CD4-positive, alpha-beta T cell (primary cell): ENCODE measurements at regions of chr10 and their contacts with region 1.

Region 1: DNA sequence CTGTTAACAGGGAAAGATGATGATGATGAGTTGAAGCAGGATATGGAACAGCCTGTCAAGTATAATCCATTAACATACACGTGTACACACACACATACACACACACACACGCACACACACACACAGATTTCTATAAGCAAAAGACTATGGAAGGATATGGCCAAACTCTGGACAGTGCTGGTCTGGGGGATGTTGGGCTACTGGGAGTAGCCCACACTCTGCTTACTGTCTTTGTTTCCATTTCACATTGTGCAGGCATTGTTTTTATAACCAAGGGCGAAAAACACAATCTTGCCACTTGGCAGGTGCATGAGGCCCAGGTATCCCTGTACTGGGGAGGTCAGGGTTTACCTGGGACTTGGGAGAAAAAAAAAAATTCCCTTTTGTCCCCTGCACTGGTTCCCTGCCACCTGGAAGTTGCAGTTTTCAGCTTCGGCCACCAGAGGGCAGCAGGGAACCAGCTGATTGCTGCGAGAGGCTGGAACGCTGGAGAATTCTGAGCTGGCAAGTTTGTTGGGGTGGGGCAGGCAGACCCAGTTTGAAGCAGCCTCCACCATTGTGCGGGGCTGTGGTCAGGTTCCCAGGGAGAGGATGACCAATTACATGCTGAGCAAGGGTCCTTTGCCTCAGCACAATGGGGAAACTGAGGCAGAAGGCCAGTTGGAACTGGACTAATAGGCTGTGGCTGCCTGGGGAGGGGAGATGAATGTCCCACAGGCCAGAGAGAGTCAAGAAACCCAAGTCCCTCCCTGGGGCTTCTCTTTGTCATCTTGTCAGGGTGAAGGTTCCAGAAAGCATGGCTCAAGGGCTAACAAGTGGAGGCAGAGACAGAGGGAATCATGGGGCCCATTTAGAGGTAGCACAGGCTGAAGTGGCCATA is 27.3 kb downstream of the PPIF start:
- DNase-seq: peak; percentile 57 to 83 (median 72)
- ATAC-seq: peak; percentile 71
- H3K4me3 ChIP-seq: no peak overlapping the region
- H3K4me3 Mint-ChIP-seq: no peak overlapping the region
- H3K27ac ChIP-seq: no peak overlapping the region
- H3K27ac Mint-ChIP-seq: no peak overlapping the region
- H3K4me1 ChIP-seq: peaks cover 3% of the 10 kb centered on the region
- H3K4me1 Mint-ChIP-seq: no peaks in the 10 kb centered on the region
- H3K27me3 ChIP-seq: no peaks in the 10 kb centered on the region
- H3K27me3 Mint-ChIP-seq: no peaks in the 10 kb centered on the region
- CTCF ChIP-seq: peak; percentile 95

Region 2: GRCh38 chr10:79463578-79464496 is 89.3 kb after region 1 on chr10:
- CTCF ChIA-PET with region 1: interaction called, 11 read pairs
- POLR2A ChIA-PET with region 1: no interaction called
- intact Hi-C with region 1: loop called (anchors 1 kb)
- DNase-seq: no peak
- ATAC-seq: no peak
- H3K4me3 ChIP-seq: no peak overlapping the region
- H3K4me3 Mint-ChIP-seq: no peak overlapping the region
- H3K27ac ChIP-seq: no peak overlapping the region
- H3K27ac Mint-ChIP-seq: no peak overlapping the region
- H3K4me1 ChIP-seq: peaks cover 3% of the 10 kb centered on the region
- H3K4me1 Mint-ChIP-seq: no peaks in the 10 kb centered on the region
- H3K27me3 ChIP-seq: no peaks in the 10 kb centered on the region
- H3K27me3 Mint-ChIP-seq: peaks cover 2% of the 10 kb centered on the region
- CTCF ChIP-seq: no peak

Region 3: DNA sequence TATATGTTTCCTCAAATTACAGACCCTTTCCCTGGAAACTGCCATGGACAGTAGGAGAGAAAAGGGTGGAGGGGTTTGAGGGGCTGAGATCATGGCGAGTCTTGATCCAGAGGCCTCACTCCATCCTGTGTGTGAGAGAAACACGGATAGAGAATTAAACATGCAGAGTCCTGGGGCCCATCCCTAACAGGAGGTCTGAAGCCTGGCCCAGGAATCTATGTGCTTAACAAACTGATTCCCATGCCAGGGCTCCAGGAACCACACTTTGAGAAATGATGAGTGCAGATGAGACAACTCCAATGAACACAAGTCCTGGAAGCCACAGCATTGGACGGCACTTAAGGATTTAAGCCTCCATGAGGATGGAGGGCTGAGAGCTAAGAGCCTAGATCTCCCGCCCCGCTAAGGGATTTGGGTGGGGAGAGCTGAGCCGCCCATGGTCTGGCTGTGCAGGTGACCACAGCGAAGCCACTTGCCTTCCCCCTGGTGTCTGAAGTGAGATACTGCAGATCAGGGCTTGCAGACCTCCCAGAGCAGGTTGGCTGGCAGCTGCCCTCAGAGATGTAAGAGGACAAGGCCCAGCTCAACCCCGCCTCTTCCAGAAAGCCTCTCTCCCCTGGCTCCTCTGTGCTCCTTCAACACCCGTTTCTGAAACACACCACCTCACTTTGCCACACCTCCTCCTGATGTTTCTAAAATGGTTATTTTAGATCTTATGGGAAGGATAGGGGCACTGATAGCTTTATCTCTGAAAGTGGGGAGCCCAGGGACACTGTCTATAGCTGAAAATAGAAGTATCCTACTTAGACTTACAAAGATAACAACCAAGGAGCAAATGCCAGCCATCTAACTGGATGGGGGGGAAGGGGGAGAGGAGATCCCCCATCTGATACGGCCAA is 113.0 kb after region 1 on chr10:
- CTCF ChIA-PET with region 1: interaction called, 6 read pairs
- POLR2A ChIA-PET with region 1: no interaction called
- intact Hi-C with region 1: loop called (anchors 1 to 2 kb)
- DNase-seq: peak in 7 of 14 experiments; percentile 8 to 57 (median 25)
- ATAC-seq: no peak
- H3K4me3 ChIP-seq: no peak overlapping the region
- H3K4me3 Mint-ChIP-seq: no peak overlapping the region
- H3K27ac ChIP-seq: no peak overlapping the region
- H3K27ac Mint-ChIP-seq: no peak overlapping the region
- H3K4me1 ChIP-seq: no peaks in the 10 kb centered on the region
- H3K4me1 Mint-ChIP-seq: no peaks in the 10 kb centered on the region
- H3K27me3 ChIP-seq: no peaks in the 10 kb centered on the region
- H3K27me3 Mint-ChIP-seq: no peaks in the 10 kb centered on the region
- CTCF ChIP-seq: peak; percentile 48